Esophagus muscularis mucosa (tissue), 4 donors: ENCODE measurements at regions of chr5 and their contacts with region 1.

Region 1: GRCh38 chr5:37326536-37326935 is 44.4 kb downstream of the NUP155 start:
- DNase-seq: no peak
- H3K4me3 ChIP-seq: no peak overlapping the region
- H3K27ac ChIP-seq: no peak overlapping the region
- H3K4me1 ChIP-seq: peaks cover 0 to 3% (median 0%) of the 10 kb centered on the region in 4 donors
- H3K27me3 ChIP-seq: no peaks in the 10 kb centered on the region
- CTCF ChIP-seq: no peak
- EP300 ChIP-seq: no peak
- POLR2A ChIP-seq: no peak

Region 2: DNA sequence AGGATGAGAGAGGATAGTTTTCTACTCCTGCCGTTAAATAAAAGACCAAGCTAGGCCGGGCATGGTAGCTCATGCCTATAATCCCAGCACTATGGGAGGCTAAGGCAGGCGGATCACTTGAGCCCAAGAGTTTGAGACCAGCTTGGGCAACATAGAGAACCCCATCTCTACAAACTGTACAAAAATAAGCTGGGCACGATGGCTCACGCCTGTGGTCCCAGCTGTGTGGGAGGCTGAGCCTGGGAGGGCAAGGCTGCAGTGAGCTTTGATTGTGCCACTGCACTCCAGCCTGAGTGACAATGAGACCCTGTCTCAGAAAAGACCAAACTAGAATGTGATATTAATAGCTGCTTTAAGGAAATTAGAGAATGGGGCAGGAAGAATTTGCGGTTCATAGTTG is 291.6 kb before region 1 on chr5:
- intact Hi-C with region 1: loop called (anchors 10 kb)
- DNase-seq: no peak
- H3K4me3 ChIP-seq: no peak overlapping the region
- H3K27ac ChIP-seq: no peak overlapping the region
- H3K4me1 ChIP-seq: no peaks in the 10 kb centered on the region
- H3K27me3 ChIP-seq: no peaks in the 10 kb centered on the region
- CTCF ChIP-seq: no peak
- EP300 ChIP-seq: no peak
- POLR2A ChIP-seq: no peak